ENCODE measurements at regions of chr9 and their contacts with region 1.

Region 1: GRCh38 chr9:115008536-115009270 is 78.3 kb upstream of the TNFSF8 start:
- DNase-seq: peak; percentile 80
- H3K4me3 Mint-ChIP-seq: no peak overlapping the region
- H3K27ac Mint-ChIP-seq: no peak overlapping the region
- H3K4me1 Mint-ChIP-seq: peaks cover 2% of the 10 kb centered on the region
- H3K27me3 Mint-ChIP-seq: peaks cover 14% of the 10 kb centered on the region
- CTCF ChIP-seq: no peak

Region 2: DNA sequence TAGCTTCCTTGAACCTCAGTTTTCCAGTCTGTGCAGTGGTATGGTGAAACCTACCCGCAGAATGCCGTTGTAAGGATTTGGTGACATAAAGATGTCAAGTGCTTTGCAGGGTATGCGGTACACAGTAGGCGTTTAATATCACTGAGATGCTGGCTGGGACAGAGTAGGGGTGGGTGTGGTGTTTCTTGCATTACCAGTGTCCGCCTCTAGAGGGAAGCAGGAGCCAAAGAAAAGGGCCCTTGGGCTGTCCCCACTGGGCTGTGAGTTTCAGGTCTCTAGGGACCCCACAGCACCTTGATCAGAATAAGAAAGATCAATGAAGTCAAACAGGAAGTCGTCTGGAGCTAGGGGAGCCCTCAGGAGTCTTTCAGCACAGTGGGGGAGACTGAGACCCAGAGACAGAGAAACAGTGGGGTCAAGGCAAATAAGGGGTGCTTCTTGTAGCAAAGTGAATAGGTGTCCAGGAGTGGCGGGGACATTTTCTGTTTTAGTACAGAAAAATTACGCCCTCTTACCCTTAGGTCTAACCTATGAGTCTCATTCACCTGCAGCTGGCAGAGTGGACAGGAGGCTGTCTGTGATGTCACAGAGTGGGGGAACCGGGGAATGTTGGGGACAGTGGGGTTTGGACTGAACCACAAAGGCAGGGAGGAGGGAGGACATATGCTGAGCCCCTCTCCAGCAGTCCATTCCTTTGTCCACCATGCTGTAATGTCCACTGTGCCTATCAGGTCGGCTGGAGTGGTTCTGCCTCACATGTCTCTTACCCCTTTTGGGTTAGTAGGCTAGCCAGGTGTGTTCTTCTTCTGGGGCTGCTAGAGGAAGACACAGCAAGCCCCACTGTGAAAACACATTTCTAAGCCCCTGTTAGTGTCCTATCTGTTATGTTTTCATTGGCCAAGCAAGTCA is 346.4 kb before region 1 on chr9:
- CTCF ChIA-PET with region 1: interaction called, 12 read pairs
- POLR2A ChIA-PET with region 1: interaction called, 3 read pairs
- intact Hi-C with region 1: no loop called
- DNase-seq: peak; percentile 64
- H3K4me3 Mint-ChIP-seq: no peak overlapping the region
- H3K27ac Mint-ChIP-seq: no peak overlapping the region
- H3K4me1 Mint-ChIP-seq: peaks cover 8% of the 10 kb centered on the region
- H3K27me3 Mint-ChIP-seq: no peaks in the 10 kb centered on the region
- CTCF ChIP-seq: peak; percentile 88

Region 3: GRCh38 chr9:114754581-114754980 is 254.1 kb before region 1 on chr9:
- CTCF ChIA-PET with region 1: no interaction called
- POLR2A ChIA-PET with region 1: no interaction called
- intact Hi-C with region 1: no loop called
- DNase-seq: no peak
- H3K4me3 Mint-ChIP-seq: no peak overlapping the region
- H3K27ac Mint-ChIP-seq: no peak overlapping the region
- H3K4me1 Mint-ChIP-seq: no peaks in the 10 kb centered on the region
- H3K27me3 Mint-ChIP-seq: peaks cover 35% of the 10 kb centered on the region
- CTCF ChIP-seq: no peak

Region 4: DNA sequence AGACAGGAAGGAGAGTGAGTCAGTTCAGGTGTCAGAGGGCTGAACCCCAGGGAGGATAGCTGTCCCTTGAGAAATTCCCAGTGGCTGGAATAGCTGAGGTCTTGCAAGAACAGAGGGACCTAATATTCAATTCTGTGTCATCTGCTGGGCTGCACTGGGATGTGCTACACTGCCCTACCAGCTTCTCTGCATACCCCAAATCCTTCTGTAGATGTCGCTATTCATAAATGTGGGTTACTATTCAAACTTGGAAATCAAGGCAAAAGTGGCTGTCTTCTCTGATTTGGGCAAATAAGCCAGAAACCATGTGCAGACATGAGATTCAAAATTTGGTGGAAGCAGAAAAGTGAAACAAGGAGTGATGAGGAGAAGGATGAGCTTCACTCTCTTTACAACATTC is 94.6 kb before region 1 on chr9:
- CTCF ChIA-PET with region 1: interaction called, 28 read pairs
- POLR2A ChIA-PET with region 1: interaction called, 5 read pairs
- intact Hi-C with region 1: no loop called
- DNase-seq: no peak
- H3K4me3 Mint-ChIP-seq: no peak overlapping the region
- H3K27ac Mint-ChIP-seq: no peak overlapping the region
- H3K4me1 Mint-ChIP-seq: peaks cover 20% of the 10 kb centered on the region
- H3K27me3 Mint-ChIP-seq: no peaks in the 10 kb centered on the region
- CTCF ChIP-seq: peak; percentile 34

Region 5: GRCh38 chr9:114953917-114954316 is 54.8 kb before region 1 on chr9:
- CTCF ChIA-PET with region 1: no interaction called
- POLR2A ChIA-PET with region 1: no interaction called
- intact Hi-C with region 1: loop called (anchors 1 kb)
- DNase-seq: peak; percentile 95
- H3K4me3 Mint-ChIP-seq: no peak overlapping the region
- H3K27ac Mint-ChIP-seq: peak overlapping the region; percentile 49
- H3K4me1 Mint-ChIP-seq: peaks cover 42% of the 10 kb centered on the region
- H3K27me3 Mint-ChIP-seq: no peaks in the 10 kb centered on the region
- CTCF ChIP-seq: no peak

Region 6: GRCh38 chr9:114968671-114969070 is 40.0 kb before region 1 on chr9:
- CTCF ChIA-PET with region 1: interaction called, 13 read pairs
- POLR2A ChIA-PET with region 1: no interaction called
- intact Hi-C with region 1: no loop called
- DNase-seq: peak; percentile 66
- H3K4me3 Mint-ChIP-seq: no peak overlapping the region
- H3K27ac Mint-ChIP-seq: no peak overlapping the region
- H3K4me1 Mint-ChIP-seq: peaks cover 4% of the 10 kb centered on the region
- H3K27me3 Mint-ChIP-seq: no peaks in the 10 kb centered on the region
- CTCF ChIP-seq: no peak

Measured in MCF 10A (cell line).